Activated CD8-positive, alpha-beta T cell treated with anti-CD3 and anti-CD28 coated beads, Interleukin-2, amount 10 ng/mL, durations not matched to agents 7 days and 5 days (primary cell): ENCODE measurements at regions of chr5 and their contacts with region 1.

Region 1: DNA sequence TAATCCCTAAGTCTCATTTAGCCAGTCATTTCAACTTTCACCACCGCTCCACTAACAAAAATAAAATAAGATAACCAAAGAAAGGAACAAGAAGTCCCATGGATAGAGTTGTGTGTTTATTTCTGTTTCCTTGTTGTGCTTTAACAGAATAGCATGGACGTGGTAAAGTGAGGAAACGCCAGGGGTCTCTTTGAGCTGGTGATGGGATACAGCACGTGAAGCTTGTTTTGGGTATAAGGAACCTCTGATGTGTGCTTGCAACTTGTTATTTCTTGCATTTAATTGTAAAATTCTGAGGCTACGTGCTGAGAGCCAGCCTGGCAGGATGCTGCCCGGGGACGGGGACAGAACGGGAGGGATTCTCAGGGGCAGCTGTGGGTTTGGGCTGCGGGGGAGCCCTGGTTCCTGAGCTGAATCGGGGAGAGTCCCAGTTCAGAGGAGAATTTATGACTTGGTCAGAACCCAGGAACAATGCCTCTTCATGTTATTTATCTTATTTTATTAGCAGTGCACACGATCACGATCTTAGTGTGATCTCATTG is 63.4 kb downstream of the ANKRD33B start:
- DNase-seq: no peak
- ATAC-seq: peak; percentile 40
- H3K4me3 Mint-ChIP-seq: peak overlapping the region; percentile 69
- H3K27ac Mint-ChIP-seq: peak overlapping the region; percentile 81
- H3K4me1 Mint-ChIP-seq: peaks cover 42% of the 10 kb centered on the region
- H3K27me3 Mint-ChIP-seq: no peaks in the 10 kb centered on the region

Region 2: GRCh38 chr5:10401498-10401897 is 225.7 kb before region 1 on chr5:
- CTCF ChIA-PET with region 1: no interaction called
- POLR2A ChIA-PET with region 1: no interaction called
- DNase-seq: no peak
- ATAC-seq: no peak
- H3K4me3 Mint-ChIP-seq: no peak overlapping the region
- H3K27ac Mint-ChIP-seq: no peak overlapping the region
- H3K4me1 Mint-ChIP-seq: peaks cover 9% of the 10 kb centered on the region
- H3K27me3 Mint-ChIP-seq: no peaks in the 10 kb centered on the region

Region 3: DNA sequence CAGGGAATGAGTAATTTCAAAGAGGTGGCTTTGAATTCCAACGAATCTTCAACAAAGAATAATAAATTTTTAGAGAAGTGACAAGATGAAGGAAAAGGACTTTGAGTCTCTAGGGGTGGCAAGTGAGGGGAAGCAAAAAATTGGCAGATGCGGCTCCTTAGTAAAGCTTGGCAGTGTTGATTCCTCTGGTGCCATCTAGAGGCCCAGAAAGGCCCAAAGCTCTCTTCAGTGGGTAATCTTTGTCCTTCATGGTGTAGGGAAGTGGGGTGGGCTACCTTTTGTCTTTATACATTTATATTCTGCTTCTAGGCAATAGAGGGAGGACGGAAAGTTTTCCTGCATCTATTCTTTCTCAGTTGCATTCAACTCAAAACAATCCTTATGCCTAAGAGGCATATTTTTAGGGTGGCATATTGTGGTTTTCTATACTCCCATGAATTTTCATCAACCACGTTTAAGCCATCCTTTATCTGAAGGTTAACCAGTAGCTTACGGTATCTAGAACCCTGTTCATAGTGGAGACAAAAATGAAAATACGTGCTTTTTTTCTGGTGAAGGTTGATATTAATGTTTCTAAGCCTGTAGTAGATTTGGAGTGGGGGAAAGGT is 203.0 kb before region 1 on chr5:
- CTCF ChIA-PET with region 1: interaction called, 10 read pairs
- POLR2A ChIA-PET with region 1: no interaction called
- DNase-seq: peak; percentile 36
- ATAC-seq: peak; percentile 60
- H3K4me3 Mint-ChIP-seq: no peak overlapping the region
- H3K27ac Mint-ChIP-seq: no peak overlapping the region
- H3K4me1 Mint-ChIP-seq: peaks cover 22% of the 10 kb centered on the region
- H3K27me3 Mint-ChIP-seq: no peaks in the 10 kb centered on the region

Region 4: DNA sequence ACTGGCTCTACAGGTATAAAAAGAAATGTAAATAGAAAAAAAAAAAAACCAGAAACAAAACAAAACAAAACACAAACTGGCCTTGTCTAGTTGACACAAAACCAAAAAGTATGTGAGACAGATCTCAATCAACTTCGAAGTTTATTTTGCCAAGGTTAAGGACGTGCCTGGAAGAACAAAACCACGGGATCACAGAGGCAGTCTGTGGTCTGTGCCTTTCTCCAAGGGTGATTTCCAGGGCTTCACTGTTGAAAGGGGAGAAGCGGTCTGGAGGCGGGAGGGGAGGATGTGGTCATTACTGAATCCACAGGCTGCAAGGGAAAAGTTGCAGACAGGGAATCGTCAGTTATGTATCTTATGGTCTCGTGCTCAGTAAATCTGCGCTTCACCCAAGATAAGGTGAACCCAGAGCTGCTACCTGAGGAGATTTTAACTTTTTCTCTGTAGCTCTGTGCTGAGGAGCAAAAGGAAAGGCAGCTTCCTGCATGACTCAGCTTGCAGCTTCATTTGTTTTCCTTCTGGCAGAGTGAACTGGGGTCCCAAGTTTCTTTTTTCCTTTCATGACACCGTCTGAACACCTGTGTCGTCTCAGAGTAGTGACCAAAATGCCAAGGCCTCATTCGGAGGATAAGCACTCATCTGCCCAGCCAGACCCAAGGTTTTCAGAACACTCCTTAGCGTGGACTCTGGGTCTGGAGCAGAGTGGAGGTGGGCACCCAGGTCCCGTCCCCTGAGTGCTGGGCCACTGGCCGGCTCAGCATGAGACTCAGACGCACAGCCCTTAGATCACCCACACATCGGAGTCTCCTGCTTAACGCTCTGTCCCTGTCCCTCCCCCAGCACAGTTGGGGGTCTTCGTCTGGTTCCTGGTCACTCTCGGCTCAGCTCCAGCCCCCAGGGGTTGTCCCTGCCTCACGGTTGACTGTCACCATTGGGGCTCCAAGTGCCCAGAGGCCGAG is 159.7 kb before region 1 on chr5:
- CTCF ChIA-PET with region 1: interaction called, 10 read pairs
- POLR2A ChIA-PET with region 1: no interaction called
- DNase-seq: no peak
- ATAC-seq: no peak
- H3K4me3 Mint-ChIP-seq: no peak overlapping the region
- H3K27ac Mint-ChIP-seq: no peak overlapping the region
- H3K4me1 Mint-ChIP-seq: peaks cover 16% of the 10 kb centered on the region
- H3K27me3 Mint-ChIP-seq: peaks cover 4% of the 10 kb centered on the region

Region 5: GRCh38 chr5:10559871-10560270 is 67.4 kb before region 1 on chr5:
- CTCF ChIA-PET with region 1: interaction called, 11 read pairs
- POLR2A ChIA-PET with region 1: interaction called, 8 read pairs
- DNase-seq: no peak
- ATAC-seq: no peak
- H3K4me3 Mint-ChIP-seq: no peak overlapping the region
- H3K27ac Mint-ChIP-seq: no peak overlapping the region
- H3K4me1 Mint-ChIP-seq: peaks cover 9% of the 10 kb centered on the region
- H3K27me3 Mint-ChIP-seq: peaks cover 45% of the 10 kb centered on the region

Region 6: DNA sequence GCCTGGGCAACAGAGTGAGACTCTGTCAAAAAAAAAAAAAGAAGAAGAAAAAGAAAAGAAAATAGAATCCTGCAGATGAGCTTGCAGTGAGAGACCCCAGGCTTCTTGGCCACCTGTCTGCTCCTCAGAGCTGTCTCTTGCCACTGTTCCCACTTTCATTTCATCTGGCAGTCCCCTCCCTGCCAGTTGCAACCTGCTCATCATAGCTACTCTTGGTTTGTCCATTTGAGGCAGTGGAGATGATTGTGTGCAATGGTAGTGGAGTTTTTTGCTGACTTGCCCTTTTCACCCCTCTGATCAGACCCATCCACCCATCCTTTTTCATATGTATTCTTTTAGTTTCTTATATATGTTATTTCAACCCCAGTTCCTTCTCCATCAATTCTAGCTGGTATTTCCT is 34.6 kb before region 1 on chr5:
- CTCF ChIA-PET with region 1: interaction called, 13 read pairs
- POLR2A ChIA-PET with region 1: no interaction called
- DNase-seq: no peak
- ATAC-seq: no peak
- H3K4me3 Mint-ChIP-seq: no peak overlapping the region
- H3K27ac Mint-ChIP-seq: no peak overlapping the region
- H3K4me1 Mint-ChIP-seq: peaks cover 30% of the 10 kb centered on the region
- H3K27me3 Mint-ChIP-seq: no peaks in the 10 kb centered on the region

Region 7: GRCh38 chr5:10701567-10702039 is 74.4 kb after region 1 on chr5:
- CTCF ChIA-PET with region 1: interaction called, 12 read pairs
- POLR2A ChIA-PET with region 1: no interaction called
- DNase-seq: peak; percentile 46
- ATAC-seq: no peak
- H3K4me3 Mint-ChIP-seq: no peak overlapping the region
- H3K27ac Mint-ChIP-seq: no peak overlapping the region
- H3K4me1 Mint-ChIP-seq: peaks cover 39% of the 10 kb centered on the region
- H3K27me3 Mint-ChIP-seq: no peaks in the 10 kb centered on the region